Activated CD4-positive, alpha-beta memory T cell treated with anti-CD3 and anti-CD28 coated beads for 36 hours (primary cell): ENCODE measurements at regions of chr15 and their contacts with region 1.

Region 1: DNA sequence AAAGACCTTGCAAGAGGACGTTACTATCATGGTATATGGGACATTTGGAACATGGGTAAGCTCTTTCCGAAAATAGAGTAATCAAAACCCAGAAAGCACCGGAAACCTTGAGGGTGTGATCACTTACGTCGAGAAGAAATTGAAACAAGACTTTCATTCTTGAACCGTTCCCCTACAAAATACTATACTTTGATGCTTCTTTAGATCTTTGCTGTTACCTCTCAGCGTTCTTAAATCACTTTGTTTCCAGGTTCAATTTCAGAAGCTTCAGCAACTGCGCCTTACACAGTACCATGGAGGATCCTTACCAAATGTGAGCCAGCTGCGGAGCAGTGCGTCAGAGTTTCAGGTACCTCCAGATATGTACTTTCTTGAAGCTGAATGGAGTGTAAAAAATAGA is 10.1 kb downstream of the CRTC3 start:
- DNase-seq: peak; percentile 67
- H3K4me3 Mint-ChIP-seq: peak overlapping the region; percentile 86
- H3K27ac Mint-ChIP-seq: peak overlapping the region; percentile 99
- H3K4me1 Mint-ChIP-seq: peaks cover 71% of the 10 kb centered on the region
- H3K27me3 Mint-ChIP-seq: no peaks in the 10 kb centered on the region

Region 2: GRCh38 chr15:90400406-90401314 is 139.1 kb before region 1 on chr15:
- CTCF ChIA-PET with region 1: no interaction called
- POLR2A ChIA-PET with region 1: no interaction called
- intact Hi-C with region 1: loop called (anchors 5 kb)
- DNase-seq: peak; percentile 72
- H3K4me3 Mint-ChIP-seq: peak overlapping the region; percentile 57
- H3K27ac Mint-ChIP-seq: peak overlapping the region; percentile 91
- H3K4me1 Mint-ChIP-seq: peaks cover 66% of the 10 kb centered on the region
- H3K27me3 Mint-ChIP-seq: no peaks in the 10 kb centered on the region

Region 3: GRCh38 chr15:90497912-90498311 is 41.9 kb before region 1 on chr15:
- CTCF ChIA-PET with region 1: no interaction called
- POLR2A ChIA-PET with region 1: no interaction called
- intact Hi-C with region 1: no loop called
- DNase-seq: no peak
- H3K4me3 Mint-ChIP-seq: no peak overlapping the region
- H3K27ac Mint-ChIP-seq: no peak overlapping the region
- H3K4me1 Mint-ChIP-seq: no peaks in the 10 kb centered on the region
- H3K27me3 Mint-ChIP-seq: no peaks in the 10 kb centered on the region

Region 4: GRCh38 chr15:90529371-90530249 is 10.2 kb before region 1 on chr15 and contains the start of gene CRTC3:
- CTCF ChIA-PET with region 1: interaction called, 12 read pairs
- POLR2A ChIA-PET with region 1: interaction called, 16 read pairs
- intact Hi-C with region 1: loop called (anchors 1 kb)
- DNase-seq: peak; percentile 64
- H3K4me3 Mint-ChIP-seq: peak within 1 kb of the TSS; percentile 91
- H3K27ac Mint-ChIP-seq: peak within 1 kb of the TSS; percentile 81
- H3K4me1 Mint-ChIP-seq: peaks cover 39% of the 10 kb centered on the region
- H3K27me3 Mint-ChIP-seq: no peaks in the 10 kb centered on the region
- total RNA-seq, gene CRTC3: 34.7 to 37.8 TPM

Region 5: GRCh38 chr15:90571063-90571541 is 31.3 kb after region 1 on chr15:
- CTCF ChIA-PET with region 1: no interaction called
- POLR2A ChIA-PET with region 1: no interaction called
- intact Hi-C with region 1: loop called (anchors 5 kb)
- DNase-seq: no peak
- H3K4me3 Mint-ChIP-seq: no peak overlapping the region
- H3K27ac Mint-ChIP-seq: no peak overlapping the region
- H3K4me1 Mint-ChIP-seq: peaks cover 66% of the 10 kb centered on the region
- H3K27me3 Mint-ChIP-seq: no peaks in the 10 kb centered on the region